ENCODE measurements at regions of chr2 and their contacts with region 1.

Region 1: GRCh38 chr2:174985630-174986029 is 19.6 kb downstream of the CHN1 start:
- DNase-seq: no peak
- H3K4me3 ChIP-seq: no peak overlapping the region
- H3K27ac ChIP-seq: no peak overlapping the region
- H3K4me1 ChIP-seq: no peaks in the 10 kb centered on the region
- H3K27me3 ChIP-seq: no peaks in the 10 kb centered on the region
- CTCF ChIP-seq: peak in 4 of 6 experiments; percentile 28 to 45 (median 40)
- POLR2A ChIP-seq: no peak

Region 2: GRCh38 chr2:174663550-174663949 is 322.1 kb before region 1 on chr2:
- intact Hi-C with region 1: no loop called
- DNase-seq: no peak
- H3K4me3 ChIP-seq: no peak overlapping the region
- H3K27ac ChIP-seq: peak overlapping the region in 1 of 3 donors; percentile 26
- H3K4me1 ChIP-seq: peaks cover 0 to 45% of the 10 kb centered on the region in 2 donors
- H3K27me3 ChIP-seq: no peaks in the 10 kb centered on the region
- CTCF ChIP-seq: no peak
- POLR2A ChIP-seq: no peak

Region 3: GRCh38 chr2:174771631-174772471 is 213.8 kb before region 1 on chr2:
- intact Hi-C with region 1: loop called (anchors 5 kb)
- DNase-seq: peak; percentile 72 to 83
- H3K4me3 ChIP-seq: no peak overlapping the region
- H3K27ac ChIP-seq: no peak overlapping the region
- H3K4me1 ChIP-seq: peaks cover 0 to 8% of the 10 kb centered on the region in 2 donors
- H3K27me3 ChIP-seq: no peaks in the 10 kb centered on the region
- CTCF ChIP-seq: peak; percentile 47 to 82 (median 71)
- POLR2A ChIP-seq: no peak

Region 4: GRCh38 chr2:175167792-175168563 is 182.3 kb after region 1 on chr2 and contains the start of gene ATF2:
- intact Hi-C with region 1: no loop called
- DNase-seq: peak; percentile 99
- H3K4me3 ChIP-seq: peak within 1 kb of the TSS; percentile 69 to 94 (median 78)
- H3K27ac ChIP-seq: peak within 1 kb of the TSS; percentile 83 to 95 (median 92)
- H3K4me1 ChIP-seq: peaks cover 13 to 18% of the 10 kb centered on the region in 2 donors
- H3K27me3 ChIP-seq: no peaks in the 10 kb centered on the region
- CTCF ChIP-seq: peak in 1 of 6 experiments; percentile 7
- POLR2A ChIP-seq: peak in 1 of 2 donors; percentile 93
- total RNA-seq, gene ATF2: 64.8 to 120 (median 88.0) TPM

Region 5: GRCh38 chr2:175218551-175218950 is 232.9 kb after region 1 on chr2:
- intact Hi-C with region 1: no loop called
- DNase-seq: no peak
- H3K4me3 ChIP-seq: no peak overlapping the region
- H3K27ac ChIP-seq: no peak overlapping the region
- H3K4me1 ChIP-seq: no peaks in the 10 kb centered on the region
- H3K27me3 ChIP-seq: no peaks in the 10 kb centered on the region
- CTCF ChIP-seq: no peak
- POLR2A ChIP-seq: no peak

Region 6: GRCh38 chr2:175402571-175402970 is 416.9 kb after region 1 on chr2:
- intact Hi-C with region 1: no loop called
- DNase-seq: no peak
- H3K4me3 ChIP-seq: no peak overlapping the region
- H3K27ac ChIP-seq: no peak overlapping the region
- H3K4me1 ChIP-seq: no peaks in the 10 kb centered on the region
- H3K27me3 ChIP-seq: no peaks in the 10 kb centered on the region
- CTCF ChIP-seq: no peak
- POLR2A ChIP-seq: no peak

Measured in thyroid gland (tissue), 4 donors.